ENCODE measurements at regions of chr6 and their contacts with region 1.

Region 1: GRCh38 chr6:43013843-43014433 is at the starts of genes KLHDC3 and MEA1:
- DNase-seq: peak; percentile 100
- H3K4me3 ChIP-seq: peak within 1 kb of the TSS; percentile 97
- H3K27me3 ChIP-seq: no peaks in the 10 kb centered on the region
- CTCF ChIP-seq: no peak
- polyA plus RNA-seq, gene KLHDC3: 56.0 and 102 TPM in 2 replicates
- polyA plus RNA-seq, gene MEA1: 107 and 121 TPM in 2 replicates

Region 2: DNA sequence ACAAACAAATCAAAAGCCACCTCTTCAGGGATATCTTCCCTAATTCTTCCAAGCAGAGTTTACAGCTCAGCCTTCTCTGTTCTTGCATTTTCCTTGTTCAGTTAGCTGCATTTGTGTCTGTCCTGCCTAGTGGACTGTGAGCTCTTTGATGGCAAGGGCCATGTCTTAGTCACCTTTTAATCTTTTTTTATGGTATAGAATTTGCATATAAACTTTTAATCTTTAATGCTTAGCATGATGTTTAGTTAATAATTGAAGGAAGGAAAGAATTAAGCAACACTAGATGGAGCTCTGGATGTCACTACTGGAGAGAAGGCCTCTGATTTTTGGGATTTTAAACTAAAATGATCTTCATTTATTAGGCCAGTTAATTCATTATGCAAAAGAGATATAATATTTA is 17.4 kb before region 1 on chr6:
- CTCF ChIA-PET with region 1: interaction called, 16 read pairs
- POLR2A ChIA-PET with region 1: no interaction called
- DNase-seq: no peak
- H3K4me3 ChIP-seq: no peak overlapping the region
- H3K27me3 ChIP-seq: no peaks in the 10 kb centered on the region
- CTCF ChIP-seq: no peak

Measured in BJ (cell line).